ENCODE measurements at regions of chr9 and their contacts with region 1.

Region 1: GRCh38 chr9:130693426-130694191 is at the start of gene EXOSC2:
- DNase-seq: peak; percentile 94 to 99 (median 98)

Region 2: GRCh38 chr9:130578865-130579737 is 114.5 kb before region 1 on chr9 and contains the start of gene FUBP3:
- intact Hi-C with region 1: loop called (anchors 5 kb)
- DNase-seq: peak; percentile 87 to 99 (median 97)

Region 3: GRCh38 chr9:131046581-131047202 is 353.1 kb after region 1 on chr9:
- intact Hi-C with region 1: loop called (anchors 10 kb)
- DNase-seq: peak; percentile 49 to 89 (median 76)